ENCODE measurements at regions of chr5 and their contacts with region 1.

Region 1: GRCh38 chr5:177351385-177352329 is at the start of gene LMAN2:
- DNase-seq: peak; percentile 74 to 95 (median 93)
- ATAC-seq: peak; percentile 99
- H3K4me3 ChIP-seq: peak within 1 kb of the TSS; percentile 91
- H3K4me3 Mint-ChIP-seq: peak within 1 kb of the TSS; percentile 93 to 99 (median 98)
- H3K27ac ChIP-seq: peak within 1 kb of the TSS; percentile 95
- H3K27ac Mint-ChIP-seq: peak within 1 kb of the TSS; percentile 93 to 100 (median 99)
- H3K4me1 ChIP-seq: peaks cover 31 to 46% of the 10 kb centered on the region in 2 donors
- H3K4me1 Mint-ChIP-seq: peaks cover 56 to 79% (median 69%) of the 10 kb centered on the region in 7 donors
- H3K27me3 ChIP-seq: no peaks in the 10 kb centered on the region
- H3K27me3 Mint-ChIP-seq: no peaks in the 10 kb centered on the region
- total RNA-seq, gene LMAN2: 71.8 to 144 (median 99.7) TPM

Region 2: DNA sequence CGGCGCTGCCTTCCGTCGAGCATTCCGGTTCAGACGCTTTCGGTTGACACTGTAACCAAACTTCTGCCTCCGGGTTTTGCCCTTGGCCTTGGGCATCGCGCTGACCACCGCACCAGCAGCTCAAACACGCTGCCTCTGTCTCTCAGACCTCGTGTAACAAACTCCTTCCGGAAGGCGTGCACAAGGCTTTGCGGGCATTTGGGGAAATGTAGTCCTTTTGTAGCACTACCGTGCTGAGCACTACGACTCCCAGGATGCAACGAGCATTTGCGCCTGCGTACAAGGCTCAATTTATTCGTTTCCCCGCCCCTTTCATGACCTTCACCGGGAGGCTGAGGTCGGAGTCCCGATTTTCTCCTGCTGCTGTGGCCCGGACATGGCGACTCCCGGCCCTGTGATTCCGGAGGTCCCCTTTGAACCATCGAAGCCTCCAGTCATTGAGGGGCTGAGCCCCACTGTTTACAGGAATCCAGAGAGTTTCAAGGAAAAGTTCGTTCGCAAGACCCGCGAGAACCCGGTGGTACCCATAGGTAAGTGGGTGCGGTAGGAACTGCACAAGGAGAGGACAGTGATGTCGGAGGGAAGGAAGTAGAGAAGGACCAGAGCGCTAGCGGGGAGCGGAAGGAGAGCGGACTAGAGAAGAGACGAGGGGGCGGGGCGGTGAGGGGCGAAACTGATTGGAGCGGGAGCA is 963.1 kb before region 1 on chr5 and contains the starts of genes HIGD2A and NOP16:
- CTCF ChIA-PET with region 1: no interaction called
- POLR2A ChIA-PET with region 1: no interaction called
- intact Hi-C with region 1: loop called in 1 of 2 experiments (anchors 2 kb)
- DNase-seq: peak; percentile 89 to 99 (median 98)
- ATAC-seq: peak; percentile 95
- H3K4me3 ChIP-seq: peak within 1 kb of the TSS; percentile 95
- H3K4me3 Mint-ChIP-seq: peak within 1 kb of the TSS; percentile 94 to 100 (median 99)
- H3K27ac ChIP-seq: peak within 1 kb of the TSS; percentile 93
- H3K27ac Mint-ChIP-seq: peak within 1 kb of the TSS; percentile 91 to 100 (median 99)
- H3K4me1 ChIP-seq: peaks cover 18% of the 10 kb centered on the region in 2 donors
- H3K4me1 Mint-ChIP-seq: peaks cover 14 to 42% (median 35%) of the 10 kb centered on the region in 7 donors
- H3K27me3 ChIP-seq: no peaks in the 10 kb centered on the region
- H3K27me3 Mint-ChIP-seq: no peaks in the 10 kb centered on the region
- total RNA-seq, gene HIGD2A: 86.8 to 124 (median 112) TPM
- total RNA-seq, gene NOP16: 12.8 to 35.3 (median 22.2) TPM

Region 3: DNA sequence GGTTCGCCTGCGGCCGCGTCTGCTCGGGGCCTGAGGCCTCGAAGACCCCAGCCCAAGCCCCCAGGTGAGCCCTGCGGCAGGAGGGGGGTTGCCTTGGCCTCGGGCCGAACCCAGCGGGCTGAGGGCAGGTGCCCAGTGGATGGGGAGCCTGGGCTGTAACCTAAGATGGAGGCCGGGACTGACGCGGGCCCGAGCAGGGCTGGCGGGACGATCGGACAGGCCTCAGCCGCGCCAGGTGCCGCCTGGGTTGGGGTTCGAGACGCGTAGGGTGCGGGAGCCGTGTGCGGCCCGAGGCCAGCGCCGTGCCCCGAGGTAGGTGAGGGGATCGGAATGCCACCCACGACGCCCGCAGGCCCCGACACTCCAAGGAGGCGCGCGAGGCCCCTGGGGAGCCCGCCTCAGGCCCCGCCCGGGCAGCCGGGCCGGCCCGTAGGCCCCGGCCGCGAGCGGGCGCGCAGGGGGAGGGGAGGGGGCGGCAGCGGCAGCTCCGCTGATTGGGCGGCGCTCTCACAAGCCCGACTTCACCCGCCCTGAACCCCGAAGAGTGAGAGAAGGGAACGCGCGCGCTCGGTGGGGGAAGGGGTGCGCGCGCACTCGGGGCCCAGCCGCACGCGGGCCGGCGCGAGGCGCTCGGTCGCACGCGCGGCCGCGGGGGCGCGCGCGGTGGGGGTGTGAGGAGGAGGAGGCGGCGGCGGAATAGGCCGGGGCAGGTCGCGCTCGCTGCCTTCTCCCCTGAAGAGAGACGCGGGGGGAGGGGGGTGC is 218.4 kb before region 1 on chr5 and contains the start of gene NSD1:
- CTCF ChIA-PET with region 1: no interaction called
- POLR2A ChIA-PET with region 1: interaction called, 4 read pairs
- intact Hi-C with region 1: loop called in 1 of 2 experiments (anchors 5 kb)
- DNase-seq: peak; percentile 86 to 94 (median 93)
- ATAC-seq: peak; percentile 89
- H3K4me3 ChIP-seq: peak within 1 kb of the TSS; percentile 61
- H3K4me3 Mint-ChIP-seq: peak within 1 kb of the TSS; percentile 60 to 88 (median 85)
- H3K27ac ChIP-seq: peak within 1 kb of the TSS; percentile 80
- H3K27ac Mint-ChIP-seq: peak within 1 kb of the TSS; percentile 48 to 95 (median 89)
- H3K4me1 ChIP-seq: peaks cover 47 to 57% of the 10 kb centered on the region in 2 donors
- H3K4me1 Mint-ChIP-seq: peaks cover 34 to 72% (median 65%) of the 10 kb centered on the region in 7 donors
- H3K27me3 ChIP-seq: no peaks in the 10 kb centered on the region
- H3K27me3 Mint-ChIP-seq: no peaks in the 10 kb centered on the region
- total RNA-seq, gene NSD1: 105 to 126 (median 117) TPM

Region 4: GRCh38 chr5:177256296-177256695 is 95.4 kb before region 1 on chr5:
- CTCF ChIA-PET with region 1: no interaction called
- POLR2A ChIA-PET with region 1: no interaction called
- intact Hi-C with region 1: no loop called
- DNase-seq: no peak
- ATAC-seq: no peak
- H3K4me3 ChIP-seq: no peak overlapping the region
- H3K4me3 Mint-ChIP-seq: no peak overlapping the region
- H3K27ac ChIP-seq: no peak overlapping the region
- H3K27ac Mint-ChIP-seq: peak overlapping the region in 3 of 9 donors; percentile 5 to 64 (median 14)
- H3K4me1 ChIP-seq: no peaks in the 10 kb centered on the region
- H3K4me1 Mint-ChIP-seq: peaks cover 0 to 9% (median 4%) of the 10 kb centered on the region in 7 donors
- H3K27me3 ChIP-seq: no peaks in the 10 kb centered on the region
- H3K27me3 Mint-ChIP-seq: no peaks in the 10 kb centered on the region

Region 5: GRCh38 chr5:177317959-177318377 is 33.7 kb before region 1 on chr5:
- CTCF ChIA-PET with region 1: interaction called, 4 read pairs
- POLR2A ChIA-PET with region 1: interaction called, 5 read pairs
- intact Hi-C with region 1: loop called in 1 of 2 experiments (anchors 1 kb)
- DNase-seq: peak; percentile 41 to 73 (median 69)
- ATAC-seq: peak; percentile 84
- H3K4me3 ChIP-seq: no peak overlapping the region
- H3K4me3 Mint-ChIP-seq: no peak overlapping the region
- H3K27ac ChIP-seq: no peak overlapping the region
- H3K27ac Mint-ChIP-seq: peak overlapping the region in 2 of 9 donors; percentile 32 to 37
- H3K4me1 ChIP-seq: peaks cover 1% of the 10 kb centered on the region in 2 donors
- H3K4me1 Mint-ChIP-seq: peaks cover 0 to 49% (median 20%) of the 10 kb centered on the region in 7 donors
- H3K27me3 ChIP-seq: no peaks in the 10 kb centered on the region
- H3K27me3 Mint-ChIP-seq: no peaks in the 10 kb centered on the region

Region 6: GRCh38 chr5:177370488-177371119 is 18.9 kb after region 1 on chr5:
- CTCF ChIA-PET with region 1: interaction called, 13 read pairs
- POLR2A ChIA-PET with region 1: interaction called, 123 read pairs
- intact Hi-C with region 1: loop called in 1 of 2 experiments (anchors 2 kb)
- DNase-seq: peak in 7 of 9 donors; percentile 36 to 74 (median 65)
- ATAC-seq: peak; percentile 90
- H3K4me3 ChIP-seq: no peak overlapping the region
- H3K4me3 Mint-ChIP-seq: peak overlapping the region in 7 of 10 donors; percentile 20 to 79 (median 64)
- H3K27ac ChIP-seq: peak overlapping the region; percentile 76
- H3K27ac Mint-ChIP-seq: peak overlapping the region in 7 of 9 donors; percentile 33 to 94 (median 86)
- H3K4me1 ChIP-seq: peaks cover 36 to 73% of the 10 kb centered on the region in 2 donors
- H3K4me1 Mint-ChIP-seq: peaks cover 51 to 80% (median 70%) of the 10 kb centered on the region in 7 donors
- H3K27me3 ChIP-seq: no peaks in the 10 kb centered on the region
- H3K27me3 Mint-ChIP-seq: no peaks in the 10 kb centered on the region

Region 7: DNA sequence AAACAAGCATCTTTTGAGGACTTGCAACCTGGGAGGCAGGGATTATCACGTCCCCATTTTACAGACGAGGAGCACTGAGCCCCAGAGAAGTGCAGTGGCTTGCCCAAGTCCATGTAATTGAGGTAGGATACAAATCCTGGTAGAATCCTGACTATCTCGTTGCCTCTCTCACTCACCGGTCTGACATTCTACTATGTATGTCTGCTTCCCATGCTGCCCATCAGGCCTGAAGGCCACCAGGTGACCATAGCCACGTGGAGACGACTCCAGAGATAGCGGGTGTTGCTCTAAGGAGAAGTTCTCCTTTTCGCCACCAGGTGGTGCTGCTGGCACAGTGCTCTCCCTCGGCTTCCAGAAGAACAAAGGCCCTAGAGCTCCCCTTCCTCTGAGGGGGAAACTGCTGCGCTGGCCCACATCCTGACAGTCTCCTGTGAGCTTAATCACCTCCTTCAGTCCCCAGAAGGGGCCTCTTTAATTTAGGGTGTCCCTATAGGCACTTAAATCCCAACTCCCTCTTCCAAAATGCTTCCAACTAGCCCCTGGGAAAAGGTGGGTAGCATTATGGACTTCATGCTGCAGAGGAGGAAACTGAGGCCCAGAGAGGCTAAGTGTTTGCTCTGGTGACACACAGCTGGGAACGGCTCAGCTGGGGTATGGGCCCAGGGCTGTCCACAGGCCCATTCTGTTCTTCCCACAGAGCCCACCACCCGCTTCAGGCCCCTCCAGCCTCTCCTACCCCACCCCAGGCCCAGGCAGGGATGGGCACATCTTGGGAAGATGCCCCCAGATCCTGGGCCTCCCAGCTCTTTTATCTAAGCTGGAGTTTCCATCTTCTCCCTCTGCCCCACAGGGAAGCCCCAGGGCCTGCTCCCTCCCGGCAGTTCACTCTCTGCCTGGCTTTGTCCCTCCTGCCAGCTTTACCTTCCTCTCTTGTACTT is 39.0 kb after region 1 on chr5:
- CTCF ChIA-PET with region 1: interaction called, 14 read pairs
- POLR2A ChIA-PET with region 1: interaction called, 5 read pairs
- intact Hi-C with region 1: no loop called
- DNase-seq: peak; percentile 76 to 91 (median 88)
- ATAC-seq: peak; percentile 89
- H3K4me3 ChIP-seq: no peak overlapping the region
- H3K4me3 Mint-ChIP-seq: peak overlapping the region in 9 of 10 donors; percentile 29 to 68 (median 53)
- H3K27ac ChIP-seq: peak overlapping the region; percentile 63
- H3K27ac Mint-ChIP-seq: peak overlapping the region in 8 of 9 donors; percentile 65 to 86 (median 78)
- H3K4me1 ChIP-seq: peaks cover 31 to 33% of the 10 kb centered on the region in 2 donors
- H3K4me1 Mint-ChIP-seq: peaks cover 30 to 39% (median 34%) of the 10 kb centered on the region in 7 donors
- H3K27me3 ChIP-seq: no peaks in the 10 kb centered on the region
- H3K27me3 Mint-ChIP-seq: peaks cover 0 to 6% (median 0%) of the 10 kb centered on the region in 5 donors

Measured in naive thymus-derived CD4-positive, alpha-beta T cell (primary cell).